Endothelial cell of umbilical vein (primary cell): ENCODE measurements at regions of chr18 and their contacts with region 1.

Region 1: GRCh38 chr18:9147440-9148202 is 11.0 kb downstream of the ANKRD12 start:
- DNase-seq: peak; percentile 79
- H3K4me3 ChIP-seq: no peak overlapping the region
- H3K27ac ChIP-seq: no peak overlapping the region
- H3K4me1 ChIP-seq: peaks cover 12% of the 10 kb centered on the region
- H3K27me3 ChIP-seq: no peaks in the 10 kb centered on the region
- CTCF ChIP-seq: peak; percentile 52 to 63
- POLR2A ChIP-seq: no peak

Region 2: GRCh38 chr18:9066817-9067306 is 80.8 kb before region 1 on chr18:
- CTCF ChIA-PET with region 1: interaction called, 60 read pairs
- POLR2A ChIA-PET with region 1: no interaction called
- dilution Hi-C with region 1: no loop called
- intact Hi-C with region 1: no loop called
- DNase-seq: no peak
- H3K4me3 ChIP-seq: no peak overlapping the region
- H3K27ac ChIP-seq: no peak overlapping the region
- H3K4me1 ChIP-seq: no peaks in the 10 kb centered on the region
- H3K27me3 ChIP-seq: no peaks in the 10 kb centered on the region
- CTCF ChIP-seq: no peak
- POLR2A ChIP-seq: no peak